Activated CD4-positive, alpha-beta memory T cell treated with anti-CD3 and anti-CD28 coated beads for 36 hours (primary cell): ENCODE measurements at regions of chr6 and their contacts with region 1.

Region 1: DNA sequence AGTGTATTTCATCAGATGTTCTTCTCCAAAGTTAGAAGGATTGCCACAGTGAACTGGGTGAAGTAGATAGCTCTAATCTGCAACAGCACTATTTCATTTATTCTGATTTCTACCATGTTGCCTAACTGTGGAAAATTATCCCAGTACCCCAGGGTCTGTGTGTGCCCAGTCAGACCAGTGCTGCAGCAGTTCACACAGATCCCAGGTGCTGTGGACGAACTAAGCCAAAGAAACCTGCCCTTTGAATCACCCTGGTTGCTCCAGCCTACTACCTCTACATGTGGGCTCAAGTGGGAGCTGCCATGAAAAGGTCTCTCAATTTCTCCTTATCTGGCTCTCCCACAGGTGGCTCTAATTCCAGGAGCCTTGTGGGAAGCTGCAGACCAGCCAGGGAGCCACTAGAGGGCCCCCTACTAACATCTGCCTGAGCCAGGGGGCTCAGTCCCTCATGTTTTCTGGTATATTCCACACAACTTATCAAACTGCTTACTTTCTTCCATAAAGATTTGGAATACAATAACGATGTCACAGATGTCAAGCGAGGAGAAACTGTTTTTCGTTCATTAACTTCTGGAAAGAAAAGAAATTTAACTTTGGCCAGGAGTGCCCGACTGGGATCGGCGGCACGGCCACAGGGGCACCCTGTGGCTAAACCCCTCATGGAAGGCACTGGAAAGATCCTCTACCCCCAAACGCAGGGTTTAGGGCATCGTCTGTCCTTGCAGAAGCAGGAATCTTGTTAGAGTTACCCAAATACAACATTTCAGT is 31.6 kb upstream of the LY86 start:
- DNase-seq: peak; percentile 62
- H3K4me3 Mint-ChIP-seq: no peak overlapping the region
- H3K27ac Mint-ChIP-seq: no peak overlapping the region
- H3K4me1 Mint-ChIP-seq: peaks cover 21% of the 10 kb centered on the region
- H3K27me3 Mint-ChIP-seq: peaks cover 2% of the 10 kb centered on the region

Region 2: DNA sequence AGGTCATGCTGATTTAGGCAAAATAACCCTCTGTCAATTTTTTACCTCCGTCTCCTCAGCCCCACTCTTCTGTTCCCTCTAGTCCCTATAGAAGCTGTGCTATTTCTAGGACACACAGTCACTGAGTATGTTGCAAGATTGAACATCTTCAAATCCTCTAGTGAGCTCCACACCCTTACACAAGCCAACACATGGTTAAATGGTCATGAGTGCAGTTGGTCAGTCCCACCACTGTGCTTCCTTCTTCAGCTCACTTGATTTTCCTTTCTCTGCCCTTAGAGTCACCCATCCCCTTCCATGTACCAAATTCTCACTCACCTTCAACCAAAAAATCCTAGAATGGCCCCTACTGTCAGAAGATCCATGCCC is 188.3 kb before region 1 on chr6:
- CTCF ChIA-PET with region 1: no interaction called
- POLR2A ChIA-PET with region 1: no interaction called
- intact Hi-C with region 1: no loop called
- DNase-seq: no peak
- H3K4me3 Mint-ChIP-seq: no peak overlapping the region
- H3K27ac Mint-ChIP-seq: no peak overlapping the region
- H3K4me1 Mint-ChIP-seq: no peaks in the 10 kb centered on the region
- H3K27me3 Mint-ChIP-seq: peaks cover 7% of the 10 kb centered on the region

Region 3: GRCh38 chr6:6515691-6516607 is 41.0 kb before region 1 on chr6:
- CTCF ChIA-PET with region 1: interaction called, 4 read pairs
- POLR2A ChIA-PET with region 1: no interaction called
- intact Hi-C with region 1: loop called (anchors 1 kb)
- DNase-seq: peak; percentile 80
- H3K4me3 Mint-ChIP-seq: no peak overlapping the region
- H3K27ac Mint-ChIP-seq: no peak overlapping the region
- H3K4me1 Mint-ChIP-seq: peaks cover 16% of the 10 kb centered on the region
- H3K27me3 Mint-ChIP-seq: peaks cover 77% of the 10 kb centered on the region

Region 4: DNA sequence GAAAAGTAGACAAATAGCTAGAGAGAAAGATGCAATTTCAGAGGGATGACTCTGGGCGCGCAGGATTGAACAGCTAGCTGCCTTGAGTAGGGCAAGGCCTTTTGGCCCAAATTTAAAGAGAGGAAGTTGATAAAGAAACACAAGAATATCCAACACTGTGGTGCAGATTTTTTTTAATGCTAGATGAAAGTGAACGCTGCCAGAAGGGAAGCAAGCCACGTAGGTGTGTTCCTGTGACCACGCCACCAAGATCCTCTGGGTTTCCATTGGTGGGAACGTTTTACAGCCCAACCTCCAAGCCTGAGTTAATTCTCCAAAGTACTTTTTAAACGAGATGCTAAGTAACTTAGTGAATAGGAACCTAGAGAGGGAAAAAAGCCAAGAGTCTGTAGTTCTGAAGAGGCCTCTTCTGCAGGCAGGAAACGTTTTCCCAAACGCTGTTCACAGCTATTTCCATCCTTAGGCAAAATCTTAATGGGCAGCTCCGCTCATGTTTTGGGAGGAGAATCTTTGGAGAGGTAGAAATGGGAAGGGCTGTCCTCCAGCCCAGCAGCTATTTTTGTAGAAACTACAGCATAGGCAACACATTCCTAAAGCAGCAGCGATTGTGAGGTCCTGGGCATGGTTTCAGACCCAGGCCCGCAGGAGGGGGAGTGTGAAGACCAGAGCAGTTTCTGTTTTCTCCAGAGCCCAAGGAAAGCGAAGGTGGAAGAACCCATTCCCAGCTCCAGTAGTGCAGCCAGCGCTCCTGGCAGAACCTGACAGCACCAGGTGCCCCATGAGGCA is 39.8 kb after region 1 on chr6:
- CTCF ChIA-PET with region 1: no interaction called
- POLR2A ChIA-PET with region 1: no interaction called
- intact Hi-C with region 1: no loop called
- DNase-seq: no peak
- H3K4me3 Mint-ChIP-seq: no peak overlapping the region
- H3K27ac Mint-ChIP-seq: no peak overlapping the region
- H3K4me1 Mint-ChIP-seq: peaks cover 32% of the 10 kb centered on the region
- H3K27me3 Mint-ChIP-seq: no peaks in the 10 kb centered on the region

Region 5: DNA sequence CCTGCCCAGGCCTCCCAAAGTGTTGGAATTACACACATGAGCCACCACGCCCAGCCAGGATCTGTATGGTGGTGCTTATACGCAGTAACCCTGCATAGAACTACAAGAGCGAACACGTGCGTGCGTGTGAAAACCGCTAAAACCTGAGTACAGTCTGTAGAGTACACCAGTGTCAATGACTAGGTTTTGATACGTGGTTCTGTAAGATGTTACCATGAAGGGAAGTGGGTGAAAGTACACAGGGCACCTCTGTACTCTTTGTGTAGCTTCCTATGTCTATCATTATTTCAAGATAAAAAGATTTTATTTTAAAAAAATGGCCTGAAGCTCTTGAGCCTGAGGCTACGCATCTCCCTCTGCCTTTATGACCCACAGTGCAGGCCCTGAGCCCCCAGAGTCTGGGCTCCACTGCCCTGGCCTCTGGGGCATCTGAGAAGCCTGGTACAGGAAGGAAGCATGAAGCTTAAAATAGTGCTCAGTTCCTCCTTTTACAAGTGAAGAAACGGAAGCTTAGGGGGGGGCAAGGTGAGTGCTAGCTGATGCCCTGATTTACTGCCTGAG is 53.2 kb after region 1 on chr6:
- CTCF ChIA-PET with region 1: interaction called, 6 read pairs
- POLR2A ChIA-PET with region 1: no interaction called
- intact Hi-C with region 1: loop called (anchors 5 kb)
- DNase-seq: peak; percentile 59
- H3K4me3 Mint-ChIP-seq: no peak overlapping the region
- H3K27ac Mint-ChIP-seq: peak overlapping the region; percentile 60
- H3K4me1 Mint-ChIP-seq: peaks cover 53% of the 10 kb centered on the region
- H3K27me3 Mint-ChIP-seq: no peaks in the 10 kb centered on the region